ENCODE measurements at regions of chr20 and their contacts with region 1.

Region 1: GRCh38 chr20:45971675-45972499 is at the start of gene ZNF335:
- DNase-seq: peak; percentile 93
- H3K4me3 Mint-ChIP-seq: peak within 1 kb of the TSS; percentile 82
- H3K27ac Mint-ChIP-seq: peak within 1 kb of the TSS; percentile 100
- H3K4me1 Mint-ChIP-seq: peaks cover 23% of the 10 kb centered on the region
- H3K27me3 Mint-ChIP-seq: peaks cover 6% of the 10 kb centered on the region
- total RNA-seq, gene ZNF335: 40.4 to 41.2 TPM

Region 2: DNA sequence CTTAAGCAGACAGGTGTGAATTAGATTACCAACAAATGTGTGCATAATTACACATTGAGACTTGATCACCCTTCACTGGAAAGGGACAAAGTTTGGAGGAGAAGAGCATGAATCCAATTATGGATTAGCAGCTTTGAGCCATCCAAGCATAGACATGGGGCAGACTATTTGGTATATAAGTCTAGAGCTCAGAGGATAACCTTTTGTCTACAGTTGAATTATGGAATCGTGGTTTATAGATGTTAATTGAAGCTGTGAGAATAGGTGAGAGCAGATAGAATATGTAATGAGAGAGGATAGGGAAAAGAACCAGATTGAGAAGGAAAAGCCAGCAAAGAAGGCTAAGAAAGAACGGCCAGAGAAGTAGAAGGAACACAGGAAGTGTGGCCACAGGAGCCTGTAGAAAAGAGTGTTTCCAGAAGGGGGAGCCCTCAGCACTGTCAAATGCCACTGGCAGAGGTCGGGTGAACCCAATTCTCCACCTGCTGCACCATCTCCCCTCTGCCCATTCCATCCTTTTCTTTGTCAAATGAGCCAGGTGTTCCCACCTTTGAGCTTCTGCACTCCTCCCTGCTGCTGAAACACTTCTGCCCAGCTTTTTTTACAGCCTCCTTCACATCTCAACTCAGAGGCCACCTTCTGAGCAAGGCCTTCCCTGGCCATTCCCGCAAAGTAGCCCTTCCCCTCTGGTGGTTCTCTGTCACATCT is 172.8 kb before region 1 on chr20:
- CTCF ChIA-PET with region 1: interaction called, 21 read pairs
- POLR2A ChIA-PET with region 1: no interaction called
- DNase-seq: peak; percentile 81
- H3K4me3 Mint-ChIP-seq: no peak overlapping the region
- H3K27ac Mint-ChIP-seq: peak overlapping the region; percentile 22
- H3K4me1 Mint-ChIP-seq: peaks cover 13% of the 10 kb centered on the region
- H3K27me3 Mint-ChIP-seq: no peaks in the 10 kb centered on the region

Region 3: GRCh38 chr20:45902199-45902701 is 69.6 kb before region 1 on chr20:
- CTCF ChIA-PET with region 1: no interaction called
- POLR2A ChIA-PET with region 1: no interaction called
- DNase-seq: no peak
- H3K4me3 Mint-ChIP-seq: no peak overlapping the region
- H3K27ac Mint-ChIP-seq: no peak overlapping the region
- H3K4me1 Mint-ChIP-seq: no peaks in the 10 kb centered on the region
- H3K27me3 Mint-ChIP-seq: no peaks in the 10 kb centered on the region

Region 4: DNA sequence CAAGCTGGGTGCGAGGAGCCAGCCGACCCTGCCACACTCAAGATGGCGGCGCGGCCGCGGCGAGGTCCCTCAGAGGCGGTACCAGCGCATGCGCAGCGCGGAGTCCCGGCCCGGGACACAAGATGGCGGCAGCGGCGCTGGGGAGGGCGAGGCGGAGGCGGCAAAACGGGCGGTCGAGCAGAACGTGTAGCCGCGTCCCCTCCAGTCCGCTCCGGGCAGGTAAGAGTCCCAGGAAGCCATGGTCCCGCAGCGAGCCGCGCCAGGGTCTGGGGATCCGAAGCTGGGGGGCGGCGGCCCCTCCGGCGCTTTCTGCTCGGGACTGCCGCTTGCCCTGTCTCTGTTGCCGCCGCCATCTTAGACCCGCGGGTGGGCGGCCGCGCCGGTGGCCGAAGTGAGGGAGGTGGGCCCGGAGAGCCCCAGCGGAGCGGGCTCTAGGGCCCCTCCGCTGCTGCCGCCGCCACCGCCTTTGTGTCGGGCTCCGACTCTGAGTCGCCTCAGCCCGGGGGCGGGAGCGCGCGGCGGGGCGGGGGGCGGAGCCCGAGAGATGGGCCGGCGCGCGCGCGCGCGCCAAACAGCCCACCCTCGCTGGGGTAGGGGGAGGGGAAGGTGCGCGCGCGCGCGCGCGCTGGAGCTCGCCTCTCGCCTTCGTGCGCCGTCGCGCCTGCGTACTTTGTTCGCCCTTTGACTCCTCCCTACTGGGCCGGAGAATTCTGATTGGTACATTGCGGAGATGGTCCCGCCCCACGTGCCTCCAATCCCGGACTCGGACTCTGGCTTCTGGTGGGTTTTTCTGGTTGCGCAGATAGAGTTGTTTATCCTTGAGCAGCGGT is 37.1 kb before region 1 on chr20 and contains the start of gene PCIF1:
- CTCF ChIA-PET with region 1: interaction called, 19 read pairs
- POLR2A ChIA-PET with region 1: no interaction called
- DNase-seq: peak; percentile 98
- H3K4me3 Mint-ChIP-seq: peak within 1 kb of the TSS; percentile 93
- H3K27ac Mint-ChIP-seq: peak within 1 kb of the TSS; percentile 97
- H3K4me1 Mint-ChIP-seq: peaks cover 36% of the 10 kb centered on the region
- H3K27me3 Mint-ChIP-seq: no peaks in the 10 kb centered on the region
- total RNA-seq, gene PCIF1: 44.0 to 44.6 TPM

Region 5: GRCh38 chr20:45953672-45954071 is 18.2 kb before region 1 on chr20:
- CTCF ChIA-PET with region 1: interaction called, 17 read pairs
- POLR2A ChIA-PET with region 1: no interaction called
- DNase-seq: no peak
- H3K4me3 Mint-ChIP-seq: no peak overlapping the region
- H3K27ac Mint-ChIP-seq: no peak overlapping the region
- H3K4me1 Mint-ChIP-seq: no peaks in the 10 kb centered on the region
- H3K27me3 Mint-ChIP-seq: no peaks in the 10 kb centered on the region

Region 6: GRCh38 chr20:46013826-46014516 is 42.1 kb after region 1 on chr20:
- CTCF ChIA-PET with region 1: interaction called, 10 read pairs
- POLR2A ChIA-PET with region 1: no interaction called
- DNase-seq: peak; percentile 66
- H3K4me3 Mint-ChIP-seq: no peak overlapping the region
- H3K27ac Mint-ChIP-seq: no peak overlapping the region
- H3K4me1 Mint-ChIP-seq: peaks cover 45% of the 10 kb centered on the region
- H3K27me3 Mint-ChIP-seq: peaks cover 63% of the 10 kb centered on the region